Psoas muscle (tissue), 8 donors: ENCODE measurements at regions of chr9 and their contacts with region 1.

Region 1: DNA sequence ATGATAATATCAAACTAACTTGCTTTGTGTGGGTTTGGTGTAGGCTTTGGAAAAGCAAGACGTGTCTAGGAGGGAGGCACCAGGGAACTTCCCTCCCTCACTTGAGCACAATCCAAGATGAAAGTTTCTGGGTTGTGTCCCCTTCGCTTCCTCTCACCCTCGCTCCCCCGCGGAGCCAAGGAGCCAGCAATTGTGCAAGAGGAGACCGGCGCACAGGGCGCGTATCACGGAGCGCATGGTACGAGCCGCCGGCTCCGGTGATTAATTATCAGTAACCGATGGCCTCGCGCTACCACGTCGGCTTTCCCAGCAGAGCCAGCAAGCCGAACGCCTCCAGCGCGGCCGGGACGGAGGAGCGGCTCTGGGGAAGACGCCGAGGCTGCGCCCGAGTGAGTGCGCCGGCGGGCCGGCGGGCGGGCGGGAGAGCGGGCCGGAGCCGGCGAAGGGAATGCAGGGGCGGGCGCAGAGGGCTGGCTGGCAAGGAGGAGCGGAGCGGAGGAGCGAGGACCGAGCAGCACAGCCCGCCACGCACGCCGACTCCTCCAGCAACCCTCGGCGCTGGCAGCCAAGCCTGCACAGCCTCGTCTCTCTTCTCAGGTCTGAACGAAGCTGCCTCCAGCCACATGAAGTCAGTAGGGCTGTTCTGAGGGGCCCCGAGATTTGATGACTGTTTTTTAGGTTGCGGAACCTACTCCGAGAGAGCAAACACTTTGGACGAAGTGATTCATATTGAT is 143.6 kb downstream of the BNC2 start:
- DNase-seq: peak; percentile 87 to 93
- ATAC-seq: peak; percentile 82 to 85 (median 84)
- H3K4me3 ChIP-seq: peak overlapping the region; percentile 80
- H3K27ac ChIP-seq: peak overlapping the region; percentile 92
- H3K4me1 ChIP-seq: peaks cover 8% of the 10 kb centered on the region
- H3K27me3 ChIP-seq: no peaks in the 10 kb centered on the region
- CTCF ChIP-seq: no peak

Region 2: GRCh38 chr9:16207161-16207560 is 519.7 kb before region 1 on chr9:
- intact Hi-C with region 1: loop called in 1 of 2 experiments (anchors 10 kb)
- DNase-seq: peak; percentile 46 to 64
- ATAC-seq: peak in 3 of 4 donors; percentile 45 to 58 (median 57)
- H3K4me3 ChIP-seq: peak overlapping the region; percentile 6
- H3K27ac ChIP-seq: no peak overlapping the region
- H3K4me1 ChIP-seq: no peaks in the 10 kb centered on the region
- H3K27me3 ChIP-seq: no peaks in the 10 kb centered on the region
- CTCF ChIP-seq: no peak

Region 3: GRCh38 chr9:16344343-16344742 is 382.5 kb before region 1 on chr9:
- intact Hi-C with region 1: no loop called
- DNase-seq: no peak
- ATAC-seq: peak in 3 of 4 donors; percentile 41 to 70 (median 53)
- H3K4me3 ChIP-seq: no peak overlapping the region
- H3K27ac ChIP-seq: peak overlapping the region; percentile 4
- H3K4me1 ChIP-seq: no peaks in the 10 kb centered on the region
- H3K27me3 ChIP-seq: no peaks in the 10 kb centered on the region
- CTCF ChIP-seq: no peak

Region 4: GRCh38 chr9:16626577-16627131 is 100.2 kb before region 1 on chr9:
- intact Hi-C with region 1: loop called in 1 of 2 experiments (anchors 10 kb)
- DNase-seq: peak; percentile 18 to 72
- ATAC-seq: peak; percentile 93 to 96 (median 95)
- H3K4me3 ChIP-seq: peak overlapping the region; percentile 44
- H3K27ac ChIP-seq: peak overlapping the region; percentile 81
- H3K4me1 ChIP-seq: peaks cover 35% of the 10 kb centered on the region
- H3K27me3 ChIP-seq: no peaks in the 10 kb centered on the region
- CTCF ChIP-seq: no peak

Region 5: GRCh38 chr9:16871356-16872151 is 144.7 kb after region 1 on chr9:
- intact Hi-C with region 1: loop called in 1 of 2 experiments (anchors 5 kb)
- DNase-seq: peak; percentile 63 to 79
- ATAC-seq: peak; percentile 52 to 62 (median 60)
- H3K4me3 ChIP-seq: peak overlapping the region; percentile 87
- H3K27ac ChIP-seq: peak overlapping the region; percentile 82
- H3K4me1 ChIP-seq: peaks cover 9% of the 10 kb centered on the region
- H3K27me3 ChIP-seq: peaks cover 0 to 3% (median 0%) of the 10 kb centered on the region in 3 donors
- CTCF ChIP-seq: no peak